ENCODE measurements at regions of chr3 and their contacts with region 1.

Region 1: DNA sequence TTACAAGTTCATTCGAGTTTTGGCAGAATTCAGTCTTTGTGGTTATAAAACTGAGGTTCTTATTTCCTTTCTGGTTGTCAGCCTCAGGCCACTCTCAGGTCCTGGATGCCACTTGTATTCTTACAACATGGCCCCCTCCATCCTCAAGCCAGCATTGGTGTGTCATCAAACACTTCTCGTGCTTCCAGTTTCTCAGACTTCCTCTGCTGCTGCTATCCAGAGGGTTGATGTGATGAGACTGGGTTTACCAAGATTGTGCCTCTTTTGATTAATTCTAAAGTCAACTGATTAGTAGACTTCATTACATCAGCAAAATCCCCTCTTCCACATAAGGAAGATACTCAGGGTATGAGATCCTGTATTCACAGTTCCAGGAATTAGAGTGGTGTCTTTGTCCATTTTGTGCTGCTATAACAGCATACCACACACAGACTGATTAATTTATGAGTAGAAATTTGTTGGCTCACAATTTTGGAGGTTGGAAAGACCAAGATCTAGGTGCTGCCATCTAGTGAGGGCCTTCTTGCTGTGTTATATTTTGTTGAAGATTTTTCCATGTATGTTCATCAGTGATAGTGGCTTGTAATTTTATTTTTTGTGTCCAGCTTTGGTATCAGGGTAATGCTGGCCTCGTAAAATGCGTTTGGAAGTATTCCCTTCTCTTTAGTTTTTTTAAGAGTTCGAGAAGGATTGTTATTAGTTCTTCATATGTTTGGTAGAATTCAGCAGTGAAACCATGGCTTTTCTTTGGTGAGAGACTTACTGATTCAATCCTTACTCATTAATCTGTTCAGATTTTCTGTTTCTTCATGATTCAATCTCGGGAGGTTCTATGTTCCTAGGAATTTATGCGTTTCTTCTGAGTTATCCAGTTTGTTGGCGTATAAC is 11.1 kb downstream of the LRCH3 start:
- DNase-seq: peak; percentile 57
- H3K4me3 Mint-ChIP-seq: no peak overlapping the region
- H3K27ac Mint-ChIP-seq: peak overlapping the region; percentile 7
- H3K4me1 Mint-ChIP-seq: peaks cover 23% of the 10 kb centered on the region
- H3K27me3 Mint-ChIP-seq: no peaks in the 10 kb centered on the region
- CTCF ChIP-seq: peak; percentile 24

Region 2: GRCh38 chr3:196757876-196758739 is 1044.0 kb before region 1 on chr3:
- CTCF ChIA-PET with region 1: no interaction called
- POLR2A ChIA-PET with region 1: no interaction called
- intact Hi-C with region 1: no loop called
- DNase-seq: peak; percentile 52
- H3K4me3 Mint-ChIP-seq: no peak overlapping the region
- H3K27ac Mint-ChIP-seq: peak overlapping the region; percentile 47
- H3K4me1 Mint-ChIP-seq: peaks cover 28% of the 10 kb centered on the region
- H3K27me3 Mint-ChIP-seq: no peaks in the 10 kb centered on the region
- CTCF ChIP-seq: no peak

Region 3: DNA sequence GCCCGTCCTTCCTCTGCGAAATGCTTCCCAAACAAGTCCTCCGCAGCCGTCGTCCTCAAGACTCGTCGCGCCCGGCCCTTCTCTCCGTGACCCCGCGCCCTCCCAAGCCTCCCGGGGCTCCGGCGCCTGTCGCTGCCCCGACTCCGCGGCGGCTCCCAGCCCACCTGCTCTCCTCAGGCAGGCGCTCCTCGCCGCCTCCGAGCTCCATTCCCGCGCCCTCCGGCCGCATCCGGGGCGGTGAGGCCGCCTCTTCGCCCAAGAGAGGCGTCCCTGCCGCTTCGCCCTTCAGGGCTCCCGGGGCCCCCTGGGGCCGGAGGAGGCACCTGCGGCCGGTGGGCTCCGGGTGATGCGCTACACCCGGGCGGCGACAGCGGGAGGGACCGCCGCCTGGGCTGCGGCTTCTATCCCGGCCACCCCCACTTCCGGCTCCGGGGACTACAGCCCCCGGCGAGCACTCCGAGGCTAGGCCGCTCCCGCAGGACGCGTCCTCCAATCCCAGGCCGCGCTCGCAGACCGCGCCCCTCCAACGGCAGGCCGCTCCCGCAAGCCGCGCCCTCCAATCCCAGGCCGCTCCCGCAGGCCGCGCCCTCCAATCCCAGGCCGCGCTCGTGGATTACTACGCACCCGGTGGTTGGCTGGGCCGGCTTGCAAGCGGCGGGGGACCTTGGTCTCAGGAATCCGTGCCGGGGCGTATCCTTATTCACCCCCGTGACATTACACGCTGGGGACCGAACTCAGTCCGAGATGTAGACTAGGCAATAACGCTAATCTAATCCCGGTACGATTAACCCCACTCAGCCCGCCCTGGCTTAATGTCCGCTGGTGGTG is 65.4 kb before region 1 on chr3 and contains the start of gene RUBCN:
- CTCF ChIA-PET with region 1: no interaction called
- POLR2A ChIA-PET with region 1: interaction called, 3 read pairs
- intact Hi-C with region 1: loop called (anchors 2 kb)
- DNase-seq: peak; percentile 92
- H3K4me3 Mint-ChIP-seq: peak within 1 kb of the TSS; percentile 82
- H3K27ac Mint-ChIP-seq: peak within 1 kb of the TSS; percentile 82
- H3K4me1 Mint-ChIP-seq: peaks cover 20% of the 10 kb centered on the region
- H3K27me3 Mint-ChIP-seq: no peaks in the 10 kb centered on the region
- CTCF ChIP-seq: no peak
- total RNA-seq, gene RUBCN: 29.9 and 35.5 TPM in 2 replicates